Activated naive CD4-positive, alpha-beta T cell treated with anti-CD3 and anti-CD28 coated beads for 36 hours (primary cell): ENCODE measurements at regions of chr20 and their contacts with region 1.

Region 1: GRCh38 chr20:19661717-19662636 is 96.1 kb upstream of the RIN2 start:
- DNase-seq: peak; percentile 63
- H3K4me3 Mint-ChIP-seq: no peak overlapping the region
- H3K27ac Mint-ChIP-seq: no peak overlapping the region
- H3K4me1 Mint-ChIP-seq: no peaks in the 10 kb centered on the region
- H3K27me3 Mint-ChIP-seq: peaks cover 11% of the 10 kb centered on the region

Region 2: GRCh38 chr20:18839507-18840247 is 822.3 kb before region 1 on chr20:
- CTCF ChIA-PET with region 1: no interaction called
- intact Hi-C with region 1: no loop called
- DNase-seq: no peak
- H3K4me3 Mint-ChIP-seq: no peak overlapping the region
- H3K27ac Mint-ChIP-seq: no peak overlapping the region
- H3K4me1 Mint-ChIP-seq: no peaks in the 10 kb centered on the region
- H3K27me3 Mint-ChIP-seq: no peaks in the 10 kb centered on the region

Region 3: DNA sequence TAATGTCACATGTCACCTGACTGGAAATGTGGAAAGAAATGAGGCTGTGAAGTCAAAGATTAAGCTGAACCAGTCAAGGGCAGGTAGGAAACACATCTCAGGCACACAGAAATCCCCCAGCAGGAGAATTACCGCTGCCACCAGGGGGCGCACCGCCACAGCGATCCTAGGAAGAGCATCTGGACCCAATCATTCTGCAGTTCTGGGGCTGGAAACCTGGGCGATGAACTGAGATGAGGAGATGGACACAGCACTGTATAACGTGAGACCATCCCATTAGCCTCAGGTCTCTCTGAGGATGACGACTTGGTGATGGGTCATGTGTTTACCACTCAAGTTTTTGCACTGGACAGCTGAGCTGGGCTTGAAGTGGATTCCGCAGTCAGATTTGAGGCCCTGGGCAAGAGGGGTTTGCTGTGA is 456.0 kb before region 1 on chr20:
- CTCF ChIA-PET with region 1: interaction called, 36 read pairs
- intact Hi-C with region 1: loop called (anchors 1 kb)
- DNase-seq: peak; percentile 76
- H3K4me3 Mint-ChIP-seq: no peak overlapping the region
- H3K27ac Mint-ChIP-seq: no peak overlapping the region
- H3K4me1 Mint-ChIP-seq: no peaks in the 10 kb centered on the region
- H3K27me3 Mint-ChIP-seq: peaks cover 33% of the 10 kb centered on the region

Region 4: DNA sequence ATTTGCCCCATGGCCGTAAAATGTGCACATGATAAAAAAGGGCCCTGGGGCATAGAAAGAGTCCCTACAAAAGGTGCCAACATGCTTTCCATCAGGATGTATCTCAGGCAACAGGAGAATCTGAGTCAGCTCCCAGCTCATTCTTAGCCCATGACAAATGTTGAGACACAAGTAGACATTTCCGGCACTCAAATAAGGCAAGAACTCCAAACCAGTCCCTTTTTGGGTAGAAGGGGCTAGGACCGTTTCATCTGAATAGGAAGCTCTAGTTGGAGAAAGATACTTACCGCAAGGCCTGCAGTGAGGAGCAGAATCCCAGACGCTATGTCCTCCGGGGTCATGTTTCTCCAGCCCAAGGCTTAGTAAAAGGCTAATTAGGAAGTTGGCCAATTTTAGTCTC is 164.9 kb before region 1 on chr20:
- CTCF ChIA-PET with region 1: no interaction called
- intact Hi-C with region 1: no loop called
- DNase-seq: no peak
- H3K4me3 Mint-ChIP-seq: no peak overlapping the region
- H3K27ac Mint-ChIP-seq: no peak overlapping the region
- H3K4me1 Mint-ChIP-seq: peaks cover 3% of the 10 kb centered on the region
- H3K27me3 Mint-ChIP-seq: peaks cover 6% of the 10 kb centered on the region

Region 5: GRCh38 chr20:19628570-19629169 is 33.3 kb before region 1 on chr20:
- CTCF ChIA-PET with region 1: interaction called, 16 read pairs
- intact Hi-C with region 1: loop called (anchors 1 kb)
- DNase-seq: peak; percentile 71
- H3K4me3 Mint-ChIP-seq: no peak overlapping the region
- H3K27ac Mint-ChIP-seq: no peak overlapping the region
- H3K4me1 Mint-ChIP-seq: peaks cover 4% of the 10 kb centered on the region
- H3K27me3 Mint-ChIP-seq: no peaks in the 10 kb centered on the region

Region 6: GRCh38 chr20:19701429-19701828 is 39.5 kb after region 1 on chr20:
- CTCF ChIA-PET with region 1: no interaction called
- intact Hi-C with region 1: no loop called
- DNase-seq: no peak
- H3K4me3 Mint-ChIP-seq: no peak overlapping the region
- H3K27ac Mint-ChIP-seq: no peak overlapping the region
- H3K4me1 Mint-ChIP-seq: no peaks in the 10 kb centered on the region
- H3K27me3 Mint-ChIP-seq: peaks cover 4% of the 10 kb centered on the region